Activated CD4-positive, alpha-beta T cell treated with anti-CD3 and anti-CD28 coated beads, Interleukin-2, amount 10 ng/mL, durations not matched to agents 24 days and 14 days (primary cell): ENCODE measurements at regions of chr2 and their contacts with region 1.

Region 1: DNA sequence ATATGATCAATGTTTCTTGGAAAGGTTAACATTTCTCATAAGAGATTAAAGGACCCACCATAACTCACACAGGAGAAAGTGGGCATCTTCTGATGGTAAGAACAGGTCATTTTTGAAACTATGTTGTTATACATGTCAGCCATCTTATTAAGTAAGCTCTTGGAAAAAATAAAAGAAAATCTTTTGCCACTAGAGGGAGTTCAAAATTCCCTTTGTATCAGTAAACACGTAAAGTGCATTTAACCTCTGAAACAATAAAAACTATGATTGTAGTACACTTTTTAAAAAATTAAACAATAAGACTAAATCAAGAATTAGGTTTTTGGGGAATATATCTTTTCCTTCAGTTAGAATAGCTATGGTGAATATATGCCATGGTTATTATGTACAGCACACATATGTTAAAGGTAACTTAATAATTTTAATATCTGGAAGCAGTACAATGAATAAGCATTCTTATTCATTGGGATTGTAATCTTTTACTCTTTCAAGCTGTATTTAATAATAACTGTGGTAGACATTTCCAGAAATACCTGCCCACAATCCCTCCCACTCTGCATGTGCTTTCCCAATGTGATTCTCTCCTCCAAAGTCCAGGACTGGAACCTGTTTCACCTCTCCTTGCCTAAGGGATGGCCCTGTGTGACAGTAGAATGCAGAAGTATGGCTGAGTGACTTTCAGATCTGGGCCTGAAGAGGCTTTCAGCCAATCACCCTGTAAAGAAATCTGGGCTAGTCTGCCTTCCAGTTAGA is 64.2 kb downstream of the RBMS1 start:
- DNase-seq: no peak
- H3K4me3 Mint-ChIP-seq: no peak overlapping the region
- H3K27ac Mint-ChIP-seq: no peak overlapping the region
- H3K4me1 Mint-ChIP-seq: peaks cover 49% of the 10 kb centered on the region
- H3K27me3 Mint-ChIP-seq: no peaks in the 10 kb centered on the region

Region 2: GRCh38 chr2:160394153-160394552 is 35.3 kb before region 1 on chr2:
- intact Hi-C with region 1: loop called (anchors 5 kb)
- DNase-seq: no peak
- H3K4me3 Mint-ChIP-seq: peak overlapping the region; percentile 45
- H3K27ac Mint-ChIP-seq: peak overlapping the region; percentile 68
- H3K4me1 Mint-ChIP-seq: peaks cover 44% of the 10 kb centered on the region
- H3K27me3 Mint-ChIP-seq: no peaks in the 10 kb centered on the region

Region 3: GRCh38 chr2:160417745-160418397 is 11.6 kb before region 1 on chr2:
- intact Hi-C with region 1: loop called (anchors 1 kb)
- DNase-seq: no peak
- H3K4me3 Mint-ChIP-seq: peak overlapping the region; percentile 41
- H3K27ac Mint-ChIP-seq: peak overlapping the region; percentile 85
- H3K4me1 Mint-ChIP-seq: peaks cover 51% of the 10 kb centered on the region
- H3K27me3 Mint-ChIP-seq: no peaks in the 10 kb centered on the region

Region 4: DNA sequence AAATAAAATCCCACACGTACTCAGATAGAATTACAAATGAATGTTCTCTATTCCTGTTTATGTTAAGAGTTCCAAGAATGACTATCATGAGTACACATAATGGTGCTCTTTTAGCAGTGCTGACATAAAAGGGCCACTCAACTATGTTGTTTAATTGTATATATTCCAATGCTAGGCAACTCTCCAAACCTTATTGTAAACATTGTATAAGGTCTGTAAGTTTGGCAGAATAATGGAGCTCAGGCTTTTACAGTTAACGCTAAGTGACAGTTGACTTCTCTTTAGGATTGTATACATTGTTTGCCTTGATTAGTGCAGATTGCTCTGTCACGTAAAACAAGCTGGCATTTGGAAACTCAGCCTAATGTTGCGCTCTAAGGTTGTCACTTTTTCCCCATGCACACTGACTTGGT is 43.4 kb after region 1 on chr2:
- intact Hi-C with region 1: loop called (anchors 2 kb)
- DNase-seq: no peak
- H3K4me3 Mint-ChIP-seq: peak overlapping the region; percentile 24
- H3K27ac Mint-ChIP-seq: peak overlapping the region; percentile 80
- H3K4me1 Mint-ChIP-seq: peaks cover 53% of the 10 kb centered on the region
- H3K27me3 Mint-ChIP-seq: no peaks in the 10 kb centered on the region

Region 5: GRCh38 chr2:161418715-161419637 is 989.6 kb after region 1 on chr2:
- intact Hi-C with region 1: no loop called
- DNase-seq: peak; percentile 72
- H3K4me3 Mint-ChIP-seq: peak overlapping the region; percentile 77
- H3K27ac Mint-ChIP-seq: no peak overlapping the region
- H3K4me1 Mint-ChIP-seq: peaks cover 49% of the 10 kb centered on the region
- H3K27me3 Mint-ChIP-seq: peaks cover 86% of the 10 kb centered on the region